Ascending aorta (tissue), 2 donors: ENCODE measurements at regions of chr7 and their contacts with region 1.

Region 1: GRCh38 chr7:101614939-101615302 is 14.2 kb downstream of the MYL10 start:
- DNase-seq: peak; percentile 51 to 87
- H3K4me3 ChIP-seq: no peak overlapping the region
- H3K27ac ChIP-seq: peak overlapping the region; percentile 75 to 96
- H3K4me1 ChIP-seq: peaks cover 11 to 21% of the 10 kb centered on the region in 2 donors
- H3K27me3 ChIP-seq: no peaks in the 10 kb centered on the region
- CTCF ChIP-seq: no peak

Region 2: DNA sequence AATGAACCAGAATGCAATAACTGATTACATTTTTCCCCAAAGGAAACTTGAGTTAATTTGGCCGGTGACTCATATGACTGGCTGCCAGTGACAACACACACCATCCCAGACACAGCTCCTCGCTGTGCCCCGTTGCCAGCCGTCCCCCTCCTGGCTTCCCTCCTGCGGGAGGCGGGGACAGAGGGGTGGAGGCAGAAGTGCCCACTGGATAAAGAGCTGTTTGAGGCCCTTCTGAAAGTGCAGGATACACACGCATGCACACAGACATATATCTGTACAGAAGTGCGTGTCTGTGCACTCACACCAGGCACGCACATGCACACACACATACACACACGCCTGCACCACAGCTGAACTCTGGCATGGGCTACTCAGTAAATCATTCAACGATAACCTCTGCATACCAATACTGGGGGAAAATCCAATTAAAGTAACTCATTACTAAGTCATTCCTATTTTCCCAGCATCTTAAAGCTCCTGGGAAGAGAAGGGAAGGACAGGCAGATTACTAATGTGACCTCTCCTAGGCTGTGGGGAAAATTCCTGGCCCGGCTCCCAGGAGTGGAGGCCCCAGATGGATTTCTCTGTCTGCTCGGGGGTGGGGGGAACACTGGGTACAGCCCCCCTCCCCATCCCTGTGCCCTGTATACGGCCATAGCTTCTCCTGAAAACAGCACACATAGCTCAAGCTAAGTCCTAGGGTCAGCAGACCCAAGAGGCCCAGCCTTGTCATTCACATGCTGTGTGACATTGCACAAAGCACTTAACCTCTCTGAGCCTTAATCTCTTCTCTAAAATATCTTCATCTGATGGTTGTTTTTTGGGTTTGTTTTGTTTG is 66.5 kb after region 1 on chr7:
- intact Hi-C with region 1: loop called (anchors 2 kb)
- DNase-seq: peak; percentile 55 to 93
- H3K4me3 ChIP-seq: no peak overlapping the region
- H3K27ac ChIP-seq: peak overlapping the region; percentile 29 to 51
- H3K4me1 ChIP-seq: peaks cover 4 to 11% of the 10 kb centered on the region in 2 donors
- H3K27me3 ChIP-seq: no peaks in the 10 kb centered on the region
- CTCF ChIP-seq: no peak